IMR-90 (cell line): ENCODE measurements at regions of chr1 and their contacts with region 1.

Region 1: GRCh38 chr1:27392096-27392777 is at the start of gene GPR3:
- DNase-seq: peak; percentile 91
- ATAC-seq: peak; percentile 92
- H3K4me3 ChIP-seq: peak within 1 kb of the TSS; percentile 63
- H3K27ac ChIP-seq: peak within 1 kb of the TSS; percentile 52; the same call in 1 of the 2 replicates
- H3K4me1 ChIP-seq: peaks cover 15% of the 10 kb centered on the region
- H3K27me3 ChIP-seq: no peaks in the 10 kb centered on the region
- CTCF ChIP-seq: peak; percentile 69
- POLR2A ChIP-seq: peak; percentile 84
- RAD21 ChIP-seq: peak; percentile 40
- total RNA-seq, gene GPR3: 0.72 and 0.83 TPM in 2 replicates

Region 2: GRCh38 chr1:27102707-27103491 is 289.3 kb before region 1 on chr1:
- CTCF ChIA-PET with region 1: no interaction called
- POLR2A ChIA-PET with region 1: no interaction called
- dilution Hi-C with region 1: no loop called
- in situ Hi-C with region 1: loop called (anchors 10 kb)
- intact Hi-C with region 1: loop called (anchors 5 kb)
- DNase-seq: peak; percentile 40
- ATAC-seq: peak; percentile 76
- H3K4me3 ChIP-seq: no peak overlapping the region
- H3K27ac ChIP-seq: no peak overlapping the region
- H3K4me1 ChIP-seq: peaks cover 16% of the 10 kb centered on the region
- H3K27me3 ChIP-seq: no peaks in the 10 kb centered on the region
- CTCF ChIP-seq: peak; percentile 96
- POLR2A ChIP-seq: 0 out of 2 replicates have a peak, but pooled peaks have one; percentile 24
- RAD21 ChIP-seq: peak; percentile 96

Region 3: DNA sequence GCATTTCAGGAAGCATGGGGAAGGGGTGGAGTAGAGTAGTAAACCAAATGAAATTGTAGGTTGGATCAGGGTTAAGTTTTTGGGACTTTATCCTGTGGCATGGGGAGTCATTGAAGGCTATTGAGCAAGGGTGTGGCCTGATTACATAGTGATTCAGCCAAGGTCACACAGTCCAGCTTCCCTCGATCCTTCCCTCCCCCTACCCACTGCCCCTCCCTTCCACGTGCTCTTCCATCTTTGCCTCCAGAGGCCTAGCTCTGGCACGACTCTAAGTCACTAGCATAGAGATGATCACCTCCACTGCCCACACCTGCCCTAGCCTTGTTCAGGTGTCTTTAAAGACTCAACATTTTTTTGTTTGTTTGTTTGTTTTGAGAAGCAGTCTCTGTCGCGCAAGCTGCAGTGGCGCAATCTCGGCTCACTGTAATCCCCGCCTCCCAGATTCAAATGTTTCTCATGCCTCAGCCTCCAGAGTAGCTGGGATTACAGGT is 200.2 kb before region 1 on chr1:
- CTCF ChIA-PET with region 1: no interaction called
- POLR2A ChIA-PET with region 1: no interaction called
- dilution Hi-C with region 1: no loop called
- in situ Hi-C with region 1: no loop called
- intact Hi-C with region 1: loop called (anchors 10 kb)
- DNase-seq: no peak
- ATAC-seq: no peak
- H3K4me3 ChIP-seq: no peak overlapping the region
- H3K27ac ChIP-seq: no peak overlapping the region
- H3K4me1 ChIP-seq: peaks cover 2% of the 10 kb centered on the region; the same call in 1 of the 2 replicates
- H3K27me3 ChIP-seq: peaks cover 5% of the 10 kb centered on the region; the same call in 1 of the 2 replicates
- CTCF ChIP-seq: no peak
- POLR2A ChIP-seq: no peak
- RAD21 ChIP-seq: no peak

Region 4: GRCh38 chr1:27300341-27301051 is 91.7 kb before region 1 on chr1:
- CTCF ChIA-PET with region 1: interaction called, 79 read pairs
- POLR2A ChIA-PET with region 1: interaction called, 7 read pairs
- dilution Hi-C with region 1: no loop called
- in situ Hi-C with region 1: loop called (anchors 5 kb)
- intact Hi-C with region 1: loop called (anchors 1 kb)
- DNase-seq: peak; percentile 93
- ATAC-seq: peak; percentile 76
- H3K4me3 ChIP-seq: no peak overlapping the region
- H3K27ac ChIP-seq: peak overlapping the region; percentile 95
- H3K4me1 ChIP-seq: peaks cover 27% of the 10 kb centered on the region
- H3K27me3 ChIP-seq: no peaks in the 10 kb centered on the region
- CTCF ChIP-seq: peak; percentile 98
- POLR2A ChIP-seq: peak; percentile 49; the same call in 1 of the 2 replicates
- RAD21 ChIP-seq: peak; percentile 98

Region 5: GRCh38 chr1:27357281-27358037 is 34.8 kb before region 1 on chr1:
- CTCF ChIA-PET with region 1: interaction called, 6 read pairs
- POLR2A ChIA-PET with region 1: no interaction called
- dilution Hi-C with region 1: no loop called
- in situ Hi-C with region 1: no loop called
- intact Hi-C with region 1: loop called (anchors 1 kb)
- DNase-seq: peak; percentile 32
- ATAC-seq: peak; percentile 95
- H3K4me3 ChIP-seq: no peak overlapping the region
- H3K27ac ChIP-seq: no peak overlapping the region
- H3K4me1 ChIP-seq: no peaks in the 10 kb centered on the region
- H3K27me3 ChIP-seq: no peaks in the 10 kb centered on the region
- CTCF ChIP-seq: peak; percentile 86
- POLR2A ChIP-seq: no peak
- RAD21 ChIP-seq: peak; percentile 65

Region 6: DNA sequence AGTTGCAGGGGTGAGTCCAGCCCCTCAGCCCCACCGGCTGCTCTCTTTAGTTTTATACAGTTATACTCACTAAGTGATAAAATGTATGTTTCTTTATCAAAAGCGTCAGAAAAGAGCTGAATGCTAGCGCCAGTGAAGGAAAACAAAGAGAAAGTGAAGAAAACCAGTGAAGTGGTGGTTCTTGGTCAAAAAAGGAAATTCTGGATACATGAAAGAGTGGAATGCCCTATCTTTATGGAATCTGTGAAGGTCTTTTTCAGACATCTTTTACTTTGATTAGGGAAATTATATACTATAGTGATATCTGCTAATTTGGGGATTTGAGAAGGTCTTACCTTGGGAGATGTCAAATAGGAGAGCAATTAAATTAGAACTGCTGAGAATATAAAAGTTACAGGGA is 41.5 kb after region 1 on chr1:
- CTCF ChIA-PET with region 1: no interaction called
- POLR2A ChIA-PET with region 1: interaction called, 11 read pairs
- dilution Hi-C with region 1: no loop called
- in situ Hi-C with region 1: no loop called
- intact Hi-C with region 1: no loop called
- DNase-seq: no peak
- ATAC-seq: no peak
- H3K4me3 ChIP-seq: no peak overlapping the region
- H3K27ac ChIP-seq: no peak overlapping the region
- H3K4me1 ChIP-seq: peaks cover 27% of the 10 kb centered on the region
- H3K27me3 ChIP-seq: no peaks in the 10 kb centered on the region
- CTCF ChIP-seq: no peak
- POLR2A ChIP-seq: no peak
- RAD21 ChIP-seq: no peak